ENCODE measurements at regions of chr18 and their contacts with region 1.

Region 1: GRCh38 chr18:21111341-21112139 is at the start of gene ROCK1:
- DNase-seq: peak; percentile 99 to 100
- ATAC-seq: peak; percentile 95 to 98 (median 96)
- H3K4me3 ChIP-seq: peak within 1 kb of the TSS; percentile 85 to 99 (median 96)
- H3K27ac ChIP-seq: peak within 1 kb of the TSS; percentile 87 to 99 (median 98)
- H3K4me1 ChIP-seq: peaks cover 0 to 48% (median 43%) of the 10 kb centered on the region in 9 donors
- H3K27me3 ChIP-seq: no peaks in the 10 kb centered on the region
- CTCF ChIP-seq: no peak
- total RNA-seq, gene ROCK1: 28.6 to 44.1 (median 36.3) TPM

Region 2: DNA sequence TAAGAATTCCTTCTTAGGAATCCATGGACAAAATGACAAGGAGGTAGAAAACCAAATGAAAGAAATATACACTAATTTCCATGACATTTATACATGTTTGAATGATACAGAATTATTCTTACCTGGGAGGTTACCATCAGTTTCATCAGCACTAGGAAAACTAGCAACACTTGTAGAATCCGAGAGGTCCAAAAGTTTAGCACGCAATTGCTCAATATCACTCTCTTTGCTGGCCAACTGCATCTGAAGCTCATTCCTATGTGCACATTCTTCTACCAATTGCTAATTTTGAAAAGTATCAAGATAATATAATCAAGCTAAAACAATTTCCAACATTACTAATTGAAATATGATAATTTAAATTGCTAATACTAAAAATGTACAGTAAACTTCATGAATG is 144.7 kb before region 1 on chr18:
- intact Hi-C with region 1: loop called in 2 of 10 experiments (anchors 10 kb)
- DNase-seq: no peak
- ATAC-seq: no peak
- H3K4me3 ChIP-seq: no peak overlapping the region
- H3K27ac ChIP-seq: no peak overlapping the region
- H3K4me1 ChIP-seq: no peaks in the 10 kb centered on the region
- H3K27me3 ChIP-seq: no peaks in the 10 kb centered on the region
- CTCF ChIP-seq: no peak

Region 3: DNA sequence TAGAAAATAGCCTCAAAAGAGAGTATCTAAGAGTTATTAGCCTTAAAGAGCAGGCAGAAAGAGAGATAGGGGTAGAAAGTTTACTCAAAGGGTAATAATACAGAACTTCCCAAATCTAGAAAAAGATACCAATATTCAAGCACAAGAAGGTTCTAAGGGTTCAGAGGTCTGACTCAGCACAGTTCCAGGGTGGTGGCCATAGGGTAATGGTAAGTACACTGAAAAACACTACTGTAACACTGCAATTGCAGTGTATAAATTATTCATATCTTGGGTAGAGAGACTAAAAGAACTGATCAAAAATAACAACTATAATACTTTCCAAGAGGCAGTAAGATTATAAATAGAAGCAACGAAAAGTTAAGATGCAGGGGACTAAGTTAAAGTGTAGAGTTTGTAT is 115.1 kb before region 1 on chr18:
- intact Hi-C with region 1: loop called in 4 of 10 experiments (anchors 10 kb)
- DNase-seq: no peak
- ATAC-seq: no peak
- H3K4me3 ChIP-seq: no peak overlapping the region
- H3K27ac ChIP-seq: no peak overlapping the region
- H3K4me1 ChIP-seq: peaks cover 0 to 22% (median 0%) of the 10 kb centered on the region in 9 donors
- H3K27me3 ChIP-seq: no peaks in the 10 kb centered on the region
- CTCF ChIP-seq: no peak

Region 4: DNA sequence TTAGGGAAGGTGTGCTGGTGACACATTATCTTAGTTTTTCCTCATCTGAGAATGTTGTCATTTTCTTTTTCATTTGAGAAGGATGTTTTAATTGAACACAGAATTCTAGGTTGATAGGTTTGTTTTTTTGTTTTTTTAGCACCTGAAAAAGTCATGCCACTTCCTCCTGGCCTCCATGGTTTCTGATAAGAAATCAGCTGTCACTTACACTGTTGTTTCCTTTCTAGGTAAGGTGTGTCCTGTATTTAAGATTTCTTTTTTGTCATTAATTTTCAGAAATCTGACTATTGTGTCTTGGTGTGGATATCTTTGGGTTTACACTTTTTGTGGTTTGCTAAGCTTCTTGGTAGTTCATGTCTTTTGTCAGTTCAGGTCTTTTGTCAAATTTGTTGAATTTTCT is 99.2 kb before region 1 on chr18:
- intact Hi-C with region 1: loop called in 5 of 10 experiments (anchors 5 to 10 kb)
- DNase-seq: no peak
- ATAC-seq: no peak
- H3K4me3 ChIP-seq: no peak overlapping the region
- H3K27ac ChIP-seq: no peak overlapping the region
- H3K4me1 ChIP-seq: no peaks in the 10 kb centered on the region
- H3K27me3 ChIP-seq: no peaks in the 10 kb centered on the region
- CTCF ChIP-seq: no peak

Region 5: DNA sequence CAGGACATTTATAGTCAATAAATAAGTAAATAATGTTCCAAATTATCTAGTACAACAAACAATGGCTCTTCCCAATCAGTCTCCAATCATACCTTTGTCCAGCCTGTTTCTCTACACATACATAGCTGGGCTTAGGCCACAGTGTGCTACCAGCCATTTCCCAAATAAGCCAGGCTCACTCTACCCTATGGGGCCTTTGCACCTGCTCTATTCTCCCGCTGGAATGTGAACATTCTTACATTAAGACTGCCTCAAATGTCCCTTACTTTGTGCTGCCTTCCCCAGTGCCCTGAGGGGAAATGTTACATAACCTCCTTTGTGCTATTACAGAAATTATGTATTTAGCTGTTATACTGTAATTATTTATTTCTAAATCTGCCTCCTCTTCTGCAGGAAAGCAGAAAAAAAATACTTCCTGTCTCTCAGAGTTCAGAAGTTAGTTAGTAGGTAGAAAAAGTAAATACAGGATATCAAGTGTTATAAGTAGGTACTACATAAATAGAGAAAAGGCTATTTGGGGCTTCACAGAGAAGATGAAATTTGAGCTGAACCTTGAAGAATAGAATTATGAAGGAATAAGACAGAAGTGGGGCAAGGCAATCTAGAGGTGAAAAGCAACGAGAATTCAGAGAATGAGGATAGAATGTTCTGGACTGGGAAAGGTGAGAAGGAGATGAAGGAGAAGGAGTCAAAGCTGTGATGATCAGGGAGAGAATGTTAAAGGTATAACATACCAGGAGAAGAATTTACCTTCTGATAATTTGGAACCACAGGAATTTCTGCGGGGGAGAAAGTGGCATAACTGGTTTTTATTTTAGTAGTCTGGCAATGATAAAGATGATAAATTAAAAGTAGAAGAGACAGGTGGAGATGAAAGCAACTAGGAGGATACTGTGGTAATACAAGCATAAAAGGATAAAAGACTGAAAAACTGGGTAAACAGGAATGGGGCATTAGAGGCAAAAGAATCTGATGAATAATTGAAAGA is 36.9 kb before region 1 on chr18:
- intact Hi-C with region 1: loop called in 1 of 10 experiments (anchors 5 kb)
- DNase-seq: no peak
- ATAC-seq: peak in 3 of 8 donors; percentile 24 to 49 (median 35)
- H3K4me3 ChIP-seq: no peak overlapping the region
- H3K27ac ChIP-seq: peak overlapping the region in 1 of 10 donors; percentile 5
- H3K4me1 ChIP-seq: peaks cover 12 to 57% (median 33%) of the 10 kb centered on the region in 9 donors
- H3K27me3 ChIP-seq: no peaks in the 10 kb centered on the region
- CTCF ChIP-seq: no peak

Region 6: GRCh38 chr18:21600526-21601410 is 489.2 kb after region 1 on chr18 and contains the start of gene ESCO1:
- intact Hi-C with region 1: loop called in 1 of 10 experiments (anchors 10 kb)
- DNase-seq: peak; percentile 93
- ATAC-seq: peak; percentile 94 to 97 (median 96)
- H3K4me3 ChIP-seq: peak within 1 kb of the TSS; percentile 81 to 100 (median 92)
- H3K27ac ChIP-seq: peak within 1 kb of the TSS; percentile 86 to 99 (median 97)
- H3K4me1 ChIP-seq: peaks cover 0 to 46% (median 24%) of the 10 kb centered on the region in 9 donors
- H3K27me3 ChIP-seq: no peaks in the 10 kb centered on the region
- CTCF ChIP-seq: peak; percentile 93 to 100 (median 98)
- total RNA-seq, gene ESCO1: 8.7 to 12.9 (median 9.9) TPM

Measured in heart right ventricle (tissue), 16 donors.